HepG2 (cell line): ENCODE measurements at regions of chr3 and their contacts with region 1.

Region 1: GRCh38 chr3:8678751-8679150 is 34.2 kb upstream of the SSUH2 start:
- DNase-seq: no peak
- ATAC-seq: no peak
- H3K4me3 ChIP-seq: no peak overlapping the region
- H3K27ac ChIP-seq: no peak overlapping the region
- H3K4me1 ChIP-seq: peaks cover 78% of the 10 kb centered on the region
- H3K27me3 ChIP-seq: no peaks in the 10 kb centered on the region
- CTCF ChIP-seq: no peak
- EP300 ChIP-seq: no peak
- POLR2A ChIP-seq: no peak
- RAD21 ChIP-seq: no peak

Region 2: DNA sequence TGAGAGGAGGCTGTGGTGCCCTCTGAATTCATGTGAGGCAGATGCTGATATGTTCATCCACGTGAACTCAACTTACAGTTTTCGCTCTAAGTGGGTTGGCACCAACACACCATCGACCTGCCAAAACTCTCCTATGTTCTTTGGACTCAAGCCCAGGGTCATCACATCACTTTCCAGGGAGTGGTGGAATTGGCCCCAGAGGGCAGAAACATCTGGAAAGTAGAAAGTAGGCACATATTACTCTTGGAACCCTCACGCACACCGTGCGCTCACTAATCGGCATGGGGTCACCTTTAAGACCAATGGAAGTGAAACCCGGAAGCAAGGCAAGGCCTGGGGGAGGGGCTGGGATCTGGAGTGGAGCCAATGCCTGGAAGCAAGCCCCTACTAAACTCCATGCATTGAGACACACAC is 75.6 kb before region 1 on chr3:
- CTCF ChIA-PET with region 1: no interaction called
- POLR2A ChIA-PET with region 1: no interaction called
- in situ Hi-C with region 1: no loop called
- intact Hi-C with region 1: no loop called
- DNase-seq: no peak
- ATAC-seq: no peak
- H3K4me3 ChIP-seq: no peak overlapping the region
- H3K27ac ChIP-seq: no peak overlapping the region
- H3K4me1 ChIP-seq: peaks cover 17% of the 10 kb centered on the region
- H3K27me3 ChIP-seq: no peaks in the 10 kb centered on the region
- CTCF ChIP-seq: no peak
- EP300 ChIP-seq: no peak
- POLR2A ChIP-seq: no peak
- RAD21 ChIP-seq: no peak

Region 3: DNA sequence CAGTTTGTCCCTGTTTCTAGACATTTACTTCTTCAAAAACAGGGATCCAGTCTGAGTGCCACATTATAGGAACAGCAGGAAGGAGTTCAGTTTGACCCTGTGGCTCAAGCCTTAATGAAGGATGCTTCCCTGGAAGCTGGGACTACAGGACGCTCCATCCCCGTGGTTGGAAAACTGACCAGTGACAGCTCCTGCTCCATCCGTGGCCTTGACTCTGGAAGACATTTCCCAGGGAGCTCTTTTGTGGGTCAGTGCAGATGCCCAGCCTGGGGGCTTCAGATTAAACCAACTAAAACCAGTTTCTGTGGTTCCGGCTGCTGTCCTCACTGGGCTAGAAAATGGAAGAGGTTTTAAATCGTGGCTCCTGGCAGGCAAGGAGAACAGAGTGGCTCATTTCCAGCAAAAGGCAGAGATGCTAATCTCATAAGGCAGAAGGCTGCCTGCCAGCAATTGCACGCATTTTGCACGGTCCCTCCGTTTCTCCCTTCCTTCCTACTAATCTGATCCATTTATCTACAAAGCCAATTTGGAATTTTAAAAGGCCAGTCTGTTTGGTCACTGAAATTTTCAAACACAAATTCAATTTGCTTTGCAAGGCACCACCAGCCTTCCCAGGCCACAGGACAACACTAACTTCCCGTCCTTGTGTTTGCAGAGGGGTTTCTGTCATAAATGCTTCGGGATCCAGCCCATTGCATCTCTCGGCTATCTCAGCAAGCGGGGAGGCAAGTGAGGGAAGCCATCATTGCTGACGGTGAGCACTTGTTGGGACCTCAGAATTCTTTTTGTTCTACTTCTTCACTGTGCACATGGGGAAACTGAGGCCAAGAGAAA is 28.0 kb before region 1 on chr3:
- CTCF ChIA-PET with region 1: no interaction called
- POLR2A ChIA-PET with region 1: interaction called, 6 read pairs
- in situ Hi-C with region 1: no loop called
- intact Hi-C with region 1: loop called (anchors 1 kb)
- DNase-seq: peak; percentile 69
- ATAC-seq: no peak
- H3K4me3 ChIP-seq: peak overlapping the region; percentile 56 to 71 (median 58)
- H3K27ac ChIP-seq: peak overlapping the region; percentile 83
- H3K4me1 ChIP-seq: peaks cover 100% of the 10 kb centered on the region
- H3K27me3 ChIP-seq: no peaks in the 10 kb centered on the region
- CTCF ChIP-seq: no peak
- EP300 ChIP-seq: no peak
- POLR2A ChIP-seq: no peak
- RAD21 ChIP-seq: no peak

Region 4: GRCh38 chr3:8734137-8734878 is 55.6 kb after region 1 on chr3:
- CTCF ChIA-PET with region 1: no interaction called
- POLR2A ChIA-PET with region 1: no interaction called
- in situ Hi-C with region 1: no loop called
- intact Hi-C with region 1: no loop called
- DNase-seq: no peak
- ATAC-seq: peak; percentile 21; the same call in 2 of the 3 replicates
- H3K4me3 ChIP-seq: no peak overlapping the region
- H3K27ac ChIP-seq: no peak overlapping the region
- H3K4me1 ChIP-seq: no peaks in the 10 kb centered on the region
- H3K27me3 ChIP-seq: peaks cover 4 to 59% of the 10 kb centered on the region in 2 experiments; a peak in 4 of 5 replicates
- CTCF ChIP-seq: no peak
- EP300 ChIP-seq: no peak
- POLR2A ChIP-seq: no peak
- RAD21 ChIP-seq: no peak

Region 5: GRCh38 chr3:8793242-8793641 is 114.5 kb after region 1 on chr3:
- CTCF ChIA-PET with region 1: no interaction called
- POLR2A ChIA-PET with region 1: no interaction called
- in situ Hi-C with region 1: no loop called
- intact Hi-C with region 1: no loop called
- DNase-seq: no peak
- ATAC-seq: no peak
- H3K4me3 ChIP-seq: no peak overlapping the region
- H3K27ac ChIP-seq: no peak overlapping the region
- H3K4me1 ChIP-seq: no peaks in the 10 kb centered on the region
- H3K27me3 ChIP-seq: no peaks in the 10 kb centered on the region
- CTCF ChIP-seq: no peak
- EP300 ChIP-seq: no peak
- POLR2A ChIP-seq: no peak
- RAD21 ChIP-seq: no peak

Region 6: DNA sequence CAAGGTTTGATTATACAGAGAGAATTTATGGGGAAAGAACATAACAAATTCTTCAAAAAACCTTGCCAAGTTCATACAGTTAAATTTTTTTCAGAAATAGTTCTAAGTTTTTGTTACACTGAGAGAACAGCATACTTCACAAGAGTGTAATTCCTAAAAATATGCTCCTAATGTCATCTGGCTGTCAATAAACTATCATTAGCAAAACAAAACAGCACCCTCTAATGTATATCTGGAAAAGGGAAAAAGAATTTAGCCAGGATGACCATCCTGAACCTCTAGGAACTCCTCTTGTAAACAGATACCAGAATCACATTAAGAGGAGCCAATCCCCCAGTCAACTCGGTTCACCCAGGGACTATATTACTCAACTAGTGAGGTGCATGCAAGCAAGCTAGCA is 221.2 kb after region 1 on chr3:
- CTCF ChIA-PET with region 1: no interaction called
- POLR2A ChIA-PET with region 1: no interaction called
- in situ Hi-C with region 1: no loop called
- intact Hi-C with region 1: no loop called
- DNase-seq: no peak
- ATAC-seq: no peak
- H3K4me3 ChIP-seq: no peak overlapping the region
- H3K27ac ChIP-seq: no peak overlapping the region
- H3K4me1 ChIP-seq: no peaks in the 10 kb centered on the region
- H3K27me3 ChIP-seq: no peaks in the 10 kb centered on the region; a peak in 1 of 5 replicates
- CTCF ChIP-seq: no peak
- EP300 ChIP-seq: no peak
- POLR2A ChIP-seq: no peak
- RAD21 ChIP-seq: no peak